Caco-2 (cell line): ENCODE measurements at regions of chr2 and their contacts with region 1.

Region 1: GRCh38 chr2:118614841-118615271 is 232.6 kb downstream of the EN1 start:
- DNase-seq: no peak
- H3K4me3 ChIP-seq: no peak overlapping the region
- H3K4me3 Mint-ChIP-seq: no peak overlapping the region
- H3K27ac Mint-ChIP-seq: peak overlapping the region; percentile 24
- H3K4me1 ChIP-seq: peaks cover 44% of the 10 kb centered on the region
- H3K4me1 Mint-ChIP-seq: peaks cover 30% of the 10 kb centered on the region
- H3K27me3 ChIP-seq: no peaks in the 10 kb centered on the region
- H3K27me3 Mint-ChIP-seq: no peaks in the 10 kb centered on the region
- CTCF ChIP-seq: no peak

Region 2: DNA sequence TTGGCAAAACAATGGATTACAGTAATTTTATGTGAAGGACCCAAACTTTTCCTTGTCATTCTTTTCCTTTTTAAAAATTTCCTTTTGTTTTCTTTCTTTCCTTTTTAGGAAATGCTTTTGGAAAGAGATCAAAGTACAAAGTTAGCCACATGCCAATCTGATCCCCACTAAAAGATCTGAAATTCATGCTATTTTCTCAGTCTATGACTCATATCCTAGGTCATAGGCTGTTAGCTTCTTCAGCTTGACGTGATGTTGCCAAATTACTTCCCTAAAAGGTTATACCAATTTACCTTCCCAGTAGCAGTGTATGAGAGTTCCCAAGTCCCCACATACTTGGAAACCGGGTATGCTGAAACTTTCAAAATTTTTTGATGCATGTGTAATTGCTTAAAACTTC is 171.3 kb before region 1 on chr2:
- CTCF ChIA-PET with region 1: no interaction called
- POLR2A ChIA-PET with region 1: no interaction called
- intact Hi-C with region 1: no loop called
- DNase-seq: no peak
- H3K4me3 ChIP-seq: no peak overlapping the region
- H3K4me3 Mint-ChIP-seq: no peak overlapping the region
- H3K27ac Mint-ChIP-seq: no peak overlapping the region
- H3K4me1 ChIP-seq: peaks cover 16% of the 10 kb centered on the region; the same call in 1 of the 2 replicates
- H3K4me1 Mint-ChIP-seq: peaks cover 7% of the 10 kb centered on the region
- H3K27me3 ChIP-seq: no peaks in the 10 kb centered on the region
- H3K27me3 Mint-ChIP-seq: peaks cover 3% of the 10 kb centered on the region
- CTCF ChIP-seq: no peak

Region 3: GRCh38 chr2:118477111-118477862 is 137.6 kb before region 1 on chr2:
- CTCF ChIA-PET with region 1: no interaction called
- POLR2A ChIA-PET with region 1: no interaction called
- intact Hi-C with region 1: loop called (anchors 1 kb)
- DNase-seq: peak; percentile 86 to 87
- H3K4me3 ChIP-seq: no peak overlapping the region
- H3K4me3 Mint-ChIP-seq: no peak overlapping the region
- H3K27ac Mint-ChIP-seq: no peak overlapping the region
- H3K4me1 ChIP-seq: peaks cover 12% of the 10 kb centered on the region
- H3K4me1 Mint-ChIP-seq: peaks cover 12% of the 10 kb centered on the region
- H3K27me3 ChIP-seq: peaks cover 8% of the 10 kb centered on the region
- H3K27me3 Mint-ChIP-seq: peaks cover 23% of the 10 kb centered on the region
- CTCF ChIP-seq: no peak

Region 4: DNA sequence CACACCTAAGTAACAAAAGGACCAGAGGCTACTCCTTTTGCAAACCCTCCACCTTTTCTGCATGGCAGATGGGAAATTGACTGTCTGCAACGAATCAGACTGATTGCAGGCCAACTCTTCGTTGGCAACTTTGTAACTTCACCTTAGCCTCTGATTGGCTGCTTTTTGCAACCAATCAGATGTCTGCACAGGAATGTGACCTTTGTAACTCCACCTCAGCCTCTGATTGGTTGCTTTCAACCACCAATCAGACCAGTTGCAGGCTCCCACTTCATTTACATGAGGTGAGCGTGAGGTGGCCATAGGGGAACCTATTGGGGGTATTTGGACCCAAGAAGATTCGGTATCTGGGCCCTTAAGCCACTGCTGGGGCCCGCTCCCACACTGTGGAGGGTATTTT is 23.6 kb after region 1 on chr2:
- CTCF ChIA-PET with region 1: no interaction called
- POLR2A ChIA-PET with region 1: no interaction called
- intact Hi-C with region 1: loop called (anchors 2 kb)
- DNase-seq: no peak
- H3K4me3 ChIP-seq: no peak overlapping the region
- H3K4me3 Mint-ChIP-seq: no peak overlapping the region
- H3K27ac Mint-ChIP-seq: no peak overlapping the region
- H3K4me1 ChIP-seq: peaks cover 20% of the 10 kb centered on the region
- H3K4me1 Mint-ChIP-seq: no peaks in the 10 kb centered on the region
- H3K27me3 ChIP-seq: no peaks in the 10 kb centered on the region
- H3K27me3 Mint-ChIP-seq: peaks cover 7% of the 10 kb centered on the region
- CTCF ChIP-seq: no peak